Activated B cell treated with CpG ODN at 0.5 μM for 24 hours (primary cell): ENCODE measurements at regions of chr1 and their contacts with region 1.

Region 1: DNA sequence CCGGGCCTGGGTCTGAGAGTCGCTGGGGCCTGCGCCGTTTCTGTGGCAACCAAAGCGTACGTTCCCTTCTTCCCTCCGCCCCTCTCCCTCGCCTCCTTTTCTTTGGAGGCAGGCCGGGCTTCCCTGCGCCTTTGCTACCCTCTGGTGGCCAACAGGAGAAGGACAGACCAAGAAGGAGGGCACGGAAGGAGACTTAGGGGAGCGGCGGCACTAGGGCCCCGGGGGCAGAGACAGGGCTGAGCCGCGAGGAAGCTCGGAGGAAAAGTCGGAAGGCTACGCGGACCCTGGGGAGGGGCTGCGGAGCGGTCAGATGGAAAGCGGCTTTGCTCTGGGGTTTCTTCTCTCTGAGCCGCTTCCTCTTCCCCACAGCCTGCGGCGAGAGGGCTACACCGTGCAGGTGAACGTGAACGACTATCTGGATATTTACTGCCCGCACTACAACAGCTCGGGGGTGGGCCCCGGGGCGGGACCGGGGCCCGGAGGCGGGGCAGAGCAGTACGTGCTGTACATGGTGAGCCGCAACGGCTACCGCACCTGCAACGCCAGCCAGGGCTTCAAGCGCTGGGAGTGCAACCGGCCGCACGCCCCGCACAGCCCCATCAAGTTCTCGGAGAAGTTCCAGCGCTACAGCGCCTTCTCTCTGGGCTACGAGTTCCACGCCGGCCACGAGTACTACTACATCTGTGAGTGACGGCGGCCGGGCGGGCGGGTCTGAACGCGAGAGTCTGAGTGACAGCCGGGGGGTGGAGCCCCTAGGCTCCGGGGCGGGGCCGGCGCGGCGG is 6.3 kb downstream of the EFNA3 start:
- DNase-seq: peak; percentile 95
- ATAC-seq: peak; percentile 77
- H3K4me3 Mint-ChIP-seq: peak overlapping the region; percentile 93
- H3K27ac Mint-ChIP-seq: peak overlapping the region; percentile 93
- H3K4me1 Mint-ChIP-seq: peaks cover 49% of the 10 kb centered on the region
- H3K27me3 Mint-ChIP-seq: peaks cover 25% of the 10 kb centered on the region
- CTCF ChIP-seq: peak; percentile 55

Region 2: GRCh38 chr1:154669464-154670282 is 415.2 kb before region 1 on chr1:
- CTCF ChIA-PET with region 1: no interaction called
- POLR2A ChIA-PET with region 1: no interaction called
- intact Hi-C with region 1: loop called (anchors 1 kb)
- DNase-seq: peak; percentile 37
- ATAC-seq: peak; percentile 98
- H3K4me3 Mint-ChIP-seq: no peak overlapping the region
- H3K27ac Mint-ChIP-seq: no peak overlapping the region
- H3K4me1 Mint-ChIP-seq: no peaks in the 10 kb centered on the region
- H3K27me3 Mint-ChIP-seq: no peaks in the 10 kb centered on the region
- CTCF ChIP-seq: no peak

Region 3: DNA sequence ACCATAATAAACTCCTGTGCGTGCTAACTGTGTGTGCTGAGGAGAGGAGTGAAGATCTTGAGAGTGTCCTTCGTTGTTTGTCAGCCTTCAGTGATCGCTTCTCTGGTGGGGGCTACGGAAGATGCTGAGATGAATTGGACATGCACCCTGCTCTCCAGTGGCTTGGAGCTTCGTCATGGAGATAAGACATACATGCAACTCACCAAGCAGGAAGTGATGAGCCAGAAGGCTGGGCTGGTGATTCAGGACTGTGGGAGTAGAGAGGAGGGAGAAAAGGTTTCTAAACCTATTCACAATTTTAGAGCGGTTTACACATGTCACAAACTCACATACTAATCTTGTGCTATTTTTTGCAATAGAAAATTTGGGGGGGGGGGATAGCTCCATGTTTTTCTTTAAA is 348.1 kb before region 1 on chr1:
- CTCF ChIA-PET with region 1: no interaction called
- POLR2A ChIA-PET with region 1: no interaction called
- intact Hi-C with region 1: no loop called
- DNase-seq: no peak
- ATAC-seq: no peak
- H3K4me3 Mint-ChIP-seq: no peak overlapping the region
- H3K27ac Mint-ChIP-seq: no peak overlapping the region
- H3K4me1 Mint-ChIP-seq: no peaks in the 10 kb centered on the region
- H3K27me3 Mint-ChIP-seq: peaks cover 22% of the 10 kb centered on the region
- CTCF ChIP-seq: no peak

Region 4: GRCh38 chr1:154974063-154974807 is 110.7 kb before region 1 on chr1 and contains the start of gene CKS1B:
- CTCF ChIA-PET with region 1: interaction called, 4 read pairs
- POLR2A ChIA-PET with region 1: interaction called, 7 read pairs
- intact Hi-C with region 1: loop called (anchors 1 kb)
- DNase-seq: peak; percentile 87
- ATAC-seq: peak; percentile 83
- H3K4me3 Mint-ChIP-seq: no peak within 1 kb of the TSS
- H3K27ac Mint-ChIP-seq: no peak within 1 kb of the TSS
- H3K4me1 Mint-ChIP-seq: peaks cover 36% of the 10 kb centered on the region
- H3K27me3 Mint-ChIP-seq: no peaks in the 10 kb centered on the region
- CTCF ChIP-seq: no peak
- total RNA-seq, gene CKS1B: 25.3 and 26.6 TPM in 2 replicates

Region 5: GRCh38 chr1:155044812-155045690 is 39.9 kb before region 1 on chr1:
- CTCF ChIA-PET with region 1: interaction called, 21 read pairs
- POLR2A ChIA-PET with region 1: interaction called, 9 read pairs
- intact Hi-C with region 1: loop called (anchors 1 kb)
- DNase-seq: peak; percentile 22
- ATAC-seq: peak; percentile 96
- H3K4me3 Mint-ChIP-seq: no peak overlapping the region
- H3K27ac Mint-ChIP-seq: no peak overlapping the region
- H3K4me1 Mint-ChIP-seq: peaks cover 4% of the 10 kb centered on the region
- H3K27me3 Mint-ChIP-seq: no peaks in the 10 kb centered on the region
- CTCF ChIP-seq: peak; percentile 58

Region 6: GRCh38 chr1:155063550-155064110 is 21.3 kb before region 1 on chr1 and contains the start of gene EFNA4:
- CTCF ChIA-PET with region 1: interaction called, 84 read pairs
- POLR2A ChIA-PET with region 1: interaction called, 54 read pairs
- intact Hi-C with region 1: loop called (anchors 1 kb)
- DNase-seq: peak; percentile 73
- ATAC-seq: peak; percentile 83
- H3K4me3 Mint-ChIP-seq: peak within 1 kb of the TSS; percentile 83
- H3K27ac Mint-ChIP-seq: peak within 1 kb of the TSS; percentile 67
- H3K4me1 Mint-ChIP-seq: peaks cover 50% of the 10 kb centered on the region
- H3K27me3 Mint-ChIP-seq: no peaks in the 10 kb centered on the region
- CTCF ChIP-seq: no peak
- total RNA-seq, gene EFNA4: 7.8 and 9.5 TPM in 2 replicates

Region 7: GRCh38 chr1:155117617-155118016 is 32.7 kb after region 1 on chr1:
- CTCF ChIA-PET with region 1: no interaction called
- POLR2A ChIA-PET with region 1: no interaction called
- intact Hi-C with region 1: no loop called
- DNase-seq: no peak
- ATAC-seq: no peak
- H3K4me3 Mint-ChIP-seq: no peak overlapping the region
- H3K27ac Mint-ChIP-seq: no peak overlapping the region
- H3K4me1 Mint-ChIP-seq: no peaks in the 10 kb centered on the region
- H3K27me3 Mint-ChIP-seq: peaks cover 15% of the 10 kb centered on the region
- CTCF ChIP-seq: no peak

Region 8: DNA sequence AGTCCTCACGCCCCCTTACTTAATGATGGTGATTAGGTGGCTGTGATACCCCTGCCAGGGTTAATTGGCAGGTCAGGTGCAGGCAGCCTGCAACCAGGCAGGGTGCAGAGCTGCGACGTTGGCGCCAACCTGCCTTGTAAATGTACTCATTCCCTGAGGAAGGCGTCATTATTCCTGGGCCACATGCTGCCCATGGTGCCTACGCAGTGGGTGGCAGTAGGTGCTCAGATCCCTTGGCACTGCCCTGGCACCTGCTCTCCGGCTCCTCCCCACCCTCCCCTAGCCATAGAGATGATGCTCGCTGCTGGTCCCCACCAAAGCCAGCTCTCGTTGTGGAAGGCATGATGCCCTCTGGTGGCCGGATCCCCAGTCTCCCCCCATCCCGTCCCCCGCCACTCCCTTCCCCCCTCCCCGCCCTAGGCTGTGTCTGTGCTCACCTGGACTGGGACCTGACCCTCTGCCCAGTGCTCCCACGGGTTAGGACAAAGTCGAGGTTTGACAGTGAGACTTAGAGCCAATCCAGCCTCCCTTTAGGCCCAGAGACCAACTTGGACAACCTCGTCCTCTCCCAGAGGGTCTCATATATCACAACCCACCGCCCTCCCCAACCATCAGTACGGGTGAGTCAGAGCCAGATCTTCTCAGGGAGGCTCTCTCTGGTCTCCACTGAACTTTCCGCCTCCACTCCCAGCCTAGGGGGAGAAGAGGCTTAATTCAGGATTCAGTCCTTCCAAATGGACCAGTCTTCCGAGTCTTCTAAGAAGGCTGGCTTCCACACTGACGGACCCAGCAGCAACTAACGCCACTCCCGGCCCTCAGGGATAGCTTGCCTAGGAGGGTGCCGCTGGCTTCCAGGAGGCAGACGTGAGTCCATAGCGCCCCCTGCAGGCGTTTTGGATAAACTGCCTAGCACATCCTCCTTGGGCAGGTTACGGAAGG is 82.5 kb after region 1 on chr1:
- CTCF ChIA-PET with region 1: interaction called, 145 read pairs
- POLR2A ChIA-PET with region 1: interaction called, 13 read pairs
- intact Hi-C with region 1: loop called (anchors 1 kb)
- DNase-seq: peak; percentile 80
- ATAC-seq: peak; percentile 82
- H3K4me3 Mint-ChIP-seq: peak overlapping the region; percentile 80
- H3K27ac Mint-ChIP-seq: peak overlapping the region; percentile 72
- H3K4me1 Mint-ChIP-seq: peaks cover 25% of the 10 kb centered on the region
- H3K27me3 Mint-ChIP-seq: no peaks in the 10 kb centered on the region
- CTCF ChIP-seq: no peak